Colonic mucosa (tissue), 4 donors: ENCODE measurements at regions of chr19 and their contacts with region 1.

Region 1: DNA sequence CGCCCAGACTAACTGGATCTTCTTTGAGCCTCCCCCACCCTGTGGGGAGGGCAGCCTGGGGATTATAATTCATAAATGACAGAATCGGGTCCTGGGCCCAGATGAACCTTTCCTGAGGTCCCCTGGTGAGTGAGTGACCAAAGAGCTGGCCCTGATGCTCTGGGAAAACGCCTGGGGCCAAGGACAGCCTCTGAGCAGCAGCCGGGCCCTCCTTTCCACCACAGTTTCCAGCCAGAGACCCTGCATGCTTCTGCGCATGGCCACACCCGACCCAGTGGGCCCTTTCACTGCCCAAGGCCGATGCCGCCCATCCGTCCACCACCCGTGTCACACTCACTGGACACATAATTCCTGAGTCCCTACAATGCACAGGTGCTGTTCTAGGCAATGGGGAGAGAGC is 43.6 kb upstream of the CCNE1 start:
- DNase-seq: no peak
- H3K4me3 ChIP-seq: no peak overlapping the region
- H3K27ac ChIP-seq: no peak overlapping the region
- H3K4me1 ChIP-seq: no peaks in the 10 kb centered on the region
- H3K27me3 ChIP-seq: no peaks in the 10 kb centered on the region
- CTCF ChIP-seq: no peak

Region 2: GRCh38 chr19:29873024-29873800 is 105.0 kb after region 1 on chr19:
- intact Hi-C with region 1: loop called (anchors 5 kb)
- DNase-seq: peak; percentile 51
- H3K4me3 ChIP-seq: peak overlapping the region; percentile 40
- H3K27ac ChIP-seq: no peak overlapping the region
- H3K4me1 ChIP-seq: peaks cover 9% of the 10 kb centered on the region
- H3K27me3 ChIP-seq: peaks cover 8% of the 10 kb centered on the region
- CTCF ChIP-seq: peak; percentile 77